BJ (cell line): ENCODE measurements at regions of chr1 and their contacts with region 1.

Region 1: GRCh38 chr1:156525071-156525501 is 24.5 kb upstream of the MEF2D start:
- DNase-seq: no peak
- H3K4me3 ChIP-seq: no peak overlapping the region
- H3K27me3 ChIP-seq: no peaks in the 10 kb centered on the region
- CTCF ChIP-seq: no peak

Region 2: DNA sequence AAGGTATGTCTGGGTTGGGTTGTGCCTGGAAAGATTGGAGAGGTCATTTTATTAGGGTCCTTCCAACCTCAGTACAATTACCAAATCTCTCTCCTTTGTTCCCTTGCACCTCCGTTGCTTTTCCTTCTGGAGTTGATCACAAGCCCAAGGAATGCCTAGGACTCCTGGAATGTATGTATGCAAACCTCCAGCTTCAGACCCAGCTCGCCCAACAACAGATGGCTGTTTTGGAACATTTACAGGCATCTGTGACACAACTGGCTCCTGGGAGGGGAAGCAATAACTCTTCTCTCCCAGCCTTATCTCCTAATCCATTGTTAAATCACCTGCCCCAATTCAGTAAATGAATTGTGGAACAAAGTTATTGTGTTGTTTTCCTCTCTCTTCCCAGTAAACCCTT is 178.4 kb before region 1 on chr1:
- CTCF ChIA-PET with region 1: no interaction called
- POLR2A ChIA-PET with region 1: interaction called, 10 read pairs
- DNase-seq: peak; percentile 53
- H3K4me3 ChIP-seq: no peak overlapping the region
- H3K27me3 ChIP-seq: no peaks in the 10 kb centered on the region; the same call in 1 of the 2 replicates
- CTCF ChIP-seq: no peak